Ovary (tissue), 10 donors: ENCODE measurements at regions of chr16 and their contacts with region 1.

Region 1: GRCh38 chr16:30922960-30923535 is 324 bp upstream of the FBXL19 start:
- DNase-seq: peak; percentile 99 to 100 (median 99)
- H3K4me3 ChIP-seq: peak overlapping the region; percentile 84
- H3K27ac ChIP-seq: peak overlapping the region; percentile 96 to 97
- H3K4me1 ChIP-seq: no peaks in the 10 kb centered on the region
- H3K27me3 ChIP-seq: no peaks in the 10 kb centered on the region
- CTCF ChIP-seq: no peak
- EP300 ChIP-seq: no peak
- POLR2A ChIP-seq: peak; percentile 44

Region 2: DNA sequence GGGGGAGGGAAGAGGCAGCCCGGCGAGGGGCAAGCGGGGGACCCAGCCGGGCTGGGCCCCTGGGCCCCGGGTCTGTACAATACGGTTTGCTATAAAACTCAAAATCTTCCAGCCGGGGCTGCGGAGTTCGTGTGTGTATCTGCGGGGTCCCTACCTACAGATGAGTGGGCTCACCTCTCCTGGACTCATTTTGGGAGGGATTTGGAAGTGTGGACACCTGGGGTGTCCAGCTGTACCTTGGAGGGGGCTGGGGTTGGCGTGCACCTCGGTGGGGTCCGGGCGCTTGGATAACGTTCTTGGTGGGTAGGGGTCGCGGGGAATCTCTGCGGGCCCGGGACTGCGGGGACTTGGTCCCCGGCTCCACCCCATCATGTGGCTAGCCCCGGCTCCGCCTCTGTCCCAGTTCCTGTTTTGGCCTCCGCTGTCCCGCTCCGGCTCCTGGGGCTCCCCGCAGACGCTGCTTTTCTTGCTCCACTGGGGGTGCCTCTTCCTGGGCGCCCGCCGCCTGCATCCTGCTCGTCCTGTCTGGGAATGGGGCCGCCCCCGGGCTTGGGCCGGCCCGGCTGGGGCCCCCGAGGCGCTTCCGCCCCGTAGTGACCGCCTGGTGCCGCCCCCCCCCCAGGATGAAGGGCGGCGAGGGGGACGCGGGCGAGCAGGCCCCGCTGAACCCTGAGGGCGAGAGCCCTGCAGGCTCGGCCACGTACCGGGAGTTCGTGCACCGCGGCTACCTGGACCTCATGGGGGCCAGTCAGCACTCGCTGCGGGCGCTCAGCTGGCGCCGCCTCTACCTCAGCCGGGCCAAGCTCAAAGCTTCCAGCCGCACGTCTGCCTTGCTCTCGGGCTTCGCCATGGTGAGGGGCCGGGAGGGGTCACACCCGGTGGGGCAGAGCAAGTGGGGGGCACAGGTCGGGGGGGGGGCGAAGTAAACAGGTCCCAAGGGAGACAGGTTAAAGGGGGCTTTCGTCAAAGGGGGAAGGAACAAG is 25.9 kb after region 1 on chr16 and contains the start of gene ORAI3:
- intact Hi-C with region 1: loop called in 1 of 4 experiments (anchors 2 kb)
- DNase-seq: peak; percentile 78 to 84 (median 80)
- H3K4me3 ChIP-seq: peak within 1 kb of the TSS; percentile 88
- H3K27ac ChIP-seq: peak within 1 kb of the TSS; percentile 69 to 87
- H3K4me1 ChIP-seq: peaks cover 10% of the 10 kb centered on the region
- H3K27me3 ChIP-seq: no peaks in the 10 kb centered on the region
- CTCF ChIP-seq: no peak
- EP300 ChIP-seq: no peak
- POLR2A ChIP-seq: no peak
- total RNA-seq, gene ORAI3: 21.5 to 30.8 (median 24.1) TPM